ENCODE measurements at regions of chr3 and their contacts with region 1.

Region 1: GRCh38 chr3:122383771-122384697 is at the start of gene FAM162A:
- DNase-seq: peak; percentile 87 to 92 (median 90)
- H3K4me3 ChIP-seq: peak within 1 kb of the TSS; percentile 75
- H3K27ac ChIP-seq: peak within 1 kb of the TSS; percentile 83 to 86
- H3K4me1 ChIP-seq: no peaks in the 10 kb centered on the region
- H3K27me3 ChIP-seq: no peaks in the 10 kb centered on the region
- CTCF ChIP-seq: peak in 2 of 3 donors; percentile 62 to 63
- EP300 ChIP-seq: no peak
- POLR2A ChIP-seq: peak; percentile 82
- total RNA-seq, gene FAM162A: 29.8 to 71.1 (median 58.7) TPM

Region 2: DNA sequence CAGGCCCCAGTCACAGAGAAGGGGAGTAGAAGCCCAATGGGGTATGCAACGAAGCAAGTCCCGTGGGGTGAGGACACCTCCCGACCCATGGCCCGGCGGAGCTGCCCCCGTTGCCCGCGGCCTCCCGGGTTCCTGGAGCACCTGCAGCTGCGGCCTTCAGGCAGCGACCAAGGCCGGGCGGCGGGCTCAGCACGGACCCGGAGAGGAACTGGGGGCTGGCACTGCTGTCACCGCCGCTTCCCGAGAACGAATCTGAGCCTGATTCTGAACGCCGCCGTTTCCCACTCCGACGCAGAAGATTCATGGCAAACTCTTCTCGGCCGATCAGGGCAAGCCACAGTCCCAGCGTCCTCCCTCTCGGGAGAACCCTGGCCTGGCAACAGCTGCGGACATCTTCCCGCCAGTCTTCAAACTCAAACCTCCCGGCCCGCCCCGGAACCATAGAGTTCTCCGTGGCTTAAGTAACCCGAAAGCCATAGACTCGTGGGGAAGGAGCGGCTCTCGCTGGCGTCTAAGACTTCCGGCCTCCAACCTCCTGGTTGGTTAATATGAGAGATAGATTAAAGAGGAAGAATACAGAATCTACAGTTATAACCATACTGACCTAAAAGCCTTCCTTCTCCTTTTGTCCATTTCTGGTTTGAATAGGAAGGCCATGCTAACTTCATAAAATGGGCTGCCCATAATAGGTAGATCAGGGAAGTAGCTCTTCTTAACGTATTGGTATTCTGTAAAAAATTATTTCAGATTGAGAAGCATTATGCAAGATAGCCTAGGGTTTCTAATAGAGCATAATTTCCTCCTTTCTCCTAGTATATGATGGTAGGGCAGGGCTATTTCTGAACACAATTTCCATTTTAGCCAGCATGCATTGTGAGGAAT is 838.2 kb before region 1 on chr3 and contains the start of gene POLQ:
- intact Hi-C with region 1: loop called in 1 of 4 experiments (anchors 10 kb)
- DNase-seq: peak; percentile 82 to 89 (median 84)
- H3K4me3 ChIP-seq: peak within 1 kb of the TSS; percentile 42
- H3K27ac ChIP-seq: peak within 1 kb of the TSS; percentile 8 to 10
- H3K4me1 ChIP-seq: peaks cover 1% of the 10 kb centered on the region
- H3K27me3 ChIP-seq: no peaks in the 10 kb centered on the region
- CTCF ChIP-seq: no peak
- EP300 ChIP-seq: no peak
- POLR2A ChIP-seq: no peak
- total RNA-seq, gene POLQ: 0.10 to 0.55 (median 0.24) TPM

Region 3: DNA sequence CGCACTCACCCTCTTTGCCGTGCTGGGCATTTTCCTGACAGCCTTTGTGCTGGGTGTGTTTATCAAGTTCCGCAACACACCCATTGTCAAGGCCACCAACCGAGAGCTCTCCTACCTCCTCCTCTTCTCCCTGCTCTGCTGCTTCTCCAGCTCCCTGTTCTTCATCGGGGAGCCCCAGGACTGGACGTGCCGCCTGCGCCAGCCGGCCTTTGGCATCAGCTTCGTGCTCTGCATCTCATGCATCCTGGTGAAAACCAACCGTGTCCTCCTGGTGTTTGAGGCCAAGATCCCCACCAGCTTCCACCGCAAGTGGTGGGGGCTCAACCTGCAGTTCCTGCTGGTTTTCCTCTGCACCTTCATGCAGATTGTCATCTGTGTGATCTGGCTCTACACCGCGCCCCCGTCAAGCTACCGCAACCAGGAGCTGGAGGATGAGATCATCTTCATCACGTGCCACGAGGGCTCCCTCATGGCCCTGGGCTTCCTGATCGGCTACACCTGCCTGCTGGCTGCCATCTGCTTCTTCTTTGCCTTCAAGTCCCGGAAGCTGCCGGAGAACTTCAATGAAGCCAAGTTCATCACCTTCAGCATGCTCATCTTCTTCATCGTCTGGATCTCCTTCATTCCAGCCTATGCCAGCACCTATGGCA is 100.1 kb before region 1 on chr3:
- intact Hi-C with region 1: no loop called
- DNase-seq: no peak
- H3K4me3 ChIP-seq: no peak overlapping the region
- H3K27ac ChIP-seq: no peak overlapping the region
- H3K4me1 ChIP-seq: no peaks in the 10 kb centered on the region
- H3K27me3 ChIP-seq: no peaks in the 10 kb centered on the region
- CTCF ChIP-seq: no peak
- EP300 ChIP-seq: no peak
- POLR2A ChIP-seq: no peak

Region 4: GRCh38 chr3:122793568-122794416 is 409.8 kb after region 1 on chr3 and contains the start of gene HSPBAP1:
- intact Hi-C with region 1: loop called in 1 of 4 experiments (anchors 10 kb)
- DNase-seq: peak; percentile 88 to 95 (median 90)
- H3K4me3 ChIP-seq: peak within 1 kb of the TSS; percentile 85
- H3K27ac ChIP-seq: peak within 1 kb of the TSS; percentile 93 to 95
- H3K4me1 ChIP-seq: peaks cover 4% of the 10 kb centered on the region
- H3K27me3 ChIP-seq: no peaks in the 10 kb centered on the region
- CTCF ChIP-seq: no peak
- EP300 ChIP-seq: peak; percentile 76
- POLR2A ChIP-seq: peak; percentile 50
- total RNA-seq, gene HSPBAP1: 5.8 to 12.8 (median 9.5) TPM

Region 5: GRCh38 chr3:123036352-123037014 is 652.4 kb after region 1 on chr3:
- intact Hi-C with region 1: loop called in 1 of 4 experiments (anchors 5 kb)
- DNase-seq: no peak
- H3K4me3 ChIP-seq: no peak overlapping the region
- H3K27ac ChIP-seq: no peak overlapping the region
- H3K4me1 ChIP-seq: no peaks in the 10 kb centered on the region
- H3K27me3 ChIP-seq: no peaks in the 10 kb centered on the region
- CTCF ChIP-seq: no peak
- EP300 ChIP-seq: no peak
- POLR2A ChIP-seq: no peak

Measured in ovary (tissue), 10 donors.